A549 (cell line): ENCODE measurements at regions of chr2 and their contacts with region 1.

Region 1: DNA sequence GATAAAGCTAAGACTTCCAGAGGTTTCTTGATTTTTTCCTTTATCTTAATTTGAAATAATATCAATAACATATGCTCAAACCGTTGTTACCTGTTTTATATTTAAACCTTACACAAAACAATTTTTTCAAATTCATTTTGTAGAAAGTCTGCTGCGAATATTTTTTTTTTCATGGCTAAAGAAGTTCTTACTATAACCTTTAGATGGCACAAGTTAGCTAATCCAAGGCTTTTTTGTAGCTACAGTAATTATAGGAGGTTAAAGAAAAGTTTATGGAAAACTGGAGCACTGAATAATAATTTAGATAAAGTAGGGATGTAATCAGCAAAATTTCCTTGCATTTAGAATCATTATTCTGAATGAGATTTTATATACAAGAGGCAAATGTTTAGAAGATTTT is 78.0 kb upstream of the PNPT1 start:
- DNase-seq: peak; percentile 33 to 53
- ATAC-seq: peak in 1 of 2 experiments; percentile 84; a peak in 3 of 6 replicates
- H3K4me3 ChIP-seq: no peak overlapping the region
- H3K27ac ChIP-seq: peak overlapping the region; percentile 65 to 78
- H3K4me1 ChIP-seq: peaks cover 15% of the 10 kb centered on the region
- CTCF ChIP-seq: peak; percentile 89
- EP300 ChIP-seq: no peak
- POLR2A ChIP-seq: no peak
- RAD21 ChIP-seq: peak; percentile 98

Region 2: GRCh38 chr2:55759271-55759921 is 12.2 kb before region 1 on chr2:
- CTCF ChIA-PET with region 1: interaction called, 13 read pairs
- POLR2A ChIA-PET with region 1: no interaction called
- DNase-seq: no peak
- ATAC-seq: no peak
- H3K4me3 ChIP-seq: no peak overlapping the region
- H3K27ac ChIP-seq: no peak overlapping the region
- H3K4me1 ChIP-seq: no peaks in the 10 kb centered on the region
- CTCF ChIP-seq: no peak
- EP300 ChIP-seq: no peak
- POLR2A ChIP-seq: no peak
- RAD21 ChIP-seq: no peak

Region 3: GRCh38 chr2:55843096-55843993 is 71.7 kb after region 1 on chr2:
- CTCF ChIA-PET with region 1: interaction called, 11 read pairs
- POLR2A ChIA-PET with region 1: interaction called, 5 read pairs
- DNase-seq: peak; percentile 18 to 95
- ATAC-seq: peak; percentile 76 to 77
- H3K4me3 ChIP-seq: peak overlapping the region; percentile 7; the same call in 1 of the 3 replicates
- H3K27ac ChIP-seq: peak overlapping the region; percentile 76 to 85
- H3K4me1 ChIP-seq: peaks cover 73% of the 10 kb centered on the region
- CTCF ChIP-seq: no peak
- EP300 ChIP-seq: peak; percentile 76 to 87; a peak in 3 of 5 replicates
- POLR2A ChIP-seq: no peak
- RAD21 ChIP-seq: peak in 1 of 2 experiments; percentile 40; a peak in 3 of 5 replicates

Region 4: DNA sequence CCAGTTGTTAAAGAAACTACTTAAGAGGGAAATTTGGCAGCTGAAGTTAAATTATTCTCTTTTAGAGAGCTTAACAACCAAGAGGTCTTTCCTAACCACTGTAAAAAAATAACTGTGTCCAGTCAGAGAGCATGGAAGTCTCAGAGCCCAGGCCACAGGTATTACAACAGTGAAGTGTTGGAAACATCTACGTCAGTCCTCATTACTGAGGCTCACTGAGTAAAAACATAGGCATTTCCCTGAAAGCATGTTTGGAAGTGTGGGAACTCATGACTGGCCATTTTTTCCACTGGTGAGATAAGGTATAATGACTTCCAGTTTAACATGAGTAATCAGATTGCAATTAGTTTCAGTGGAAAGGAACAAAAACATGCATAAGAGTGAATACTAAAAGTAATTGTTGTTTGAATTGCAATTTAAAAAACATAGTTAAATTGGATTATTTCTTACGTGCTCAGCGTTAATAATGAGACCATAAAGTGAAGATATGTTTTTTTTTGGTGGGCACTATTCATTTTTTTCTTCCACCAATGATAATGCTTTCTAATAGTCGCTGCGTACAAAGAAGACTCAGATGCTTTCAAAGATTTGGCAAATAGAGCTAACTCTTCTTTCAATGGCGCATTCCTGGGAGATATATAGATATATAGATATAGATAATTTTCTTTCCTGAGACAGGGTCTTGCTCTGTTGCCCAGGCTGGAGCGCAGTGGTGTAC is 91.2 kb after region 1 on chr2:
- CTCF ChIA-PET with region 1: interaction called, 17 read pairs
- POLR2A ChIA-PET with region 1: interaction called, 3 read pairs
- DNase-seq: peak; percentile 53 to 94
- ATAC-seq: peak; percentile 94 to 99
- H3K4me3 ChIP-seq: no peak overlapping the region
- H3K27ac ChIP-seq: peak overlapping the region; percentile 89 to 90
- H3K4me1 ChIP-seq: peaks cover 38% of the 10 kb centered on the region
- CTCF ChIP-seq: no peak
- EP300 ChIP-seq: peak; percentile 51 to 87; a peak in 3 of 5 replicates
- POLR2A ChIP-seq: no peak
- RAD21 ChIP-seq: peak; percentile 6 to 57; a peak in 1 of 5 replicates

Region 5: DNA sequence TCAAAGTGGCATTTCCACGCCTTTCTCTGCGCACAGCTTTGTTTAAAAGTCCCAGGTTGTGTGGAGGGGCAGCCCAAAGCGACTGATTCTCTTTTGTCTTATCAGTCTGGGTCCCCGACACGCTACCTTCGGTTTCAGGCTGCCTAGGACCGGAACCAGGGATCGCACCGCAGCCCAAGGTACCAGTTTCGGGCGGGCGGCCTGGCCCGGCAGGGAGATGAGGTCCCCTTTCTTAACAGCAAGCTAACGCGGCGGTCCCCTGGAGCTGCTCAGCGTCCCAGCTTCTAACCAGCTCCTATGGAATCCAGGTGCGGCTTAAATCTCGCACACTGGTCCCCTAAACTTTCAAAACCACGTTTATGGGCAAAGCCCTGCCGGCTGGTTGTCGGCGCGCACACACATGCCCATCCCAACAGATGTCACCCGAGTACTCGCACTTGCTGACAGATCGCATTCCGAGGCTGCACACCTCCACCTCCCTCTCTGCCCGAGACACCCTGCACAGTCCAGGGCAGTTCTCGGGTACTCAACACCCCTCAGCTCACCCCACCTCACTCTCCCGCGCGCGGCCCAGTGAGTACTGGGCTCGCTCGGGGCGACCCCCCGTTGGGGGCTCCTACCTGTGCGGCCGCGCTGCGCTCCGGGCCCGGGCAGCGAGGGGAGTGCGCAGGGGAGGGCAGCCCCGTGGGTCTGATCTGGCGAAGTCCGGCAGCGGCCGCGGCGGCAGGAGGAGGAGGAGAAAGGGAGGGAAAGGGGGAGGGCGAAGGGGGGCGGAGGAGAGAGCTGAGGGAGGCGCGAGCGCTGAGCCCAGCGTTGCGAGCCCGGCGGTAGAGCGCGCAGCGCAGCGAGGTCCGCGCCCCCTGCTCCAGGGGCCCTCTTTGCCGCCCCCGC is 151.7 kb after region 1 on chr2 and contains the start of gene EFEMP1:
- CTCF ChIA-PET with region 1: interaction called, 11 read pairs
- POLR2A ChIA-PET with region 1: no interaction called
- DNase-seq: peak; percentile 41 to 57
- ATAC-seq: peak; percentile 92 to 96
- H3K4me3 ChIP-seq: peak within 1 kb of the TSS; percentile 78
- H3K27ac ChIP-seq: peak within 1 kb of the TSS; percentile 70 to 85
- H3K4me1 ChIP-seq: 0 out of 3 replicates have a peak, but pooled peaks cover 6% of the 10 kb centered on the region
- CTCF ChIP-seq: no peak; the same call in 2 of the 3 replicates
- EP300 ChIP-seq: no peak
- POLR2A ChIP-seq: peak; percentile 20; the same call in 1 of the 2 replicates
- RAD21 ChIP-seq: peak; percentile 33 to 51; a peak in 3 of 5 replicates
- polyA plus RNA-seq, gene EFEMP1: 54.6 and 59.2 TPM in 2 replicates

Region 6: DNA sequence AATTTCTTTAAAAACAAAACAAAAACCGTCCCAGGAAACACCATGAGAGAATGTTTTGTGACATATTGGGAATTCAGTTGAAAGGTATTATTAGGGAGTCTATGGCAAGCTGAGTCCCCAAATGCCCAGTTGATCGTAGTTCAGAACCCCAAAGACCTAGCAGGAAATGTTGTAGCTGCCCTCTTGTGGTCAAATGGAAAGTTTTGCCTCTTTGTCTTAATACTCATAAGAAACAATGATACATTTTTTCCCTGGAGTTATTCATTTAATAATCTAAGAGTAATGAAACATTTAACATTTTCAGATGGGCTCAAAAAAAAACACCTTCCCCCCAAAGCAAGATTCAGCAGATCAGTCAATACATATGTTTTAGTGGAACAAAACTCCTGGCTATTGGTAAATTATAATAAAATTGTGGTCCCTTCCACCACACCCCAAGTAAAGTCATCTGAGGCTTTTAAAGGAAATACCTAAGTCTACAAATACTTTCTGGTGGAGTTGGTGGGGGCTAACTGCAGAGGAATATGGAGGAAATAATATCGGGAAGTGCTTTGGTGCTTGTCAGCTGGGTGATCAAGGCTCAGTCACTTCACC is 189.8 kb after region 1 on chr2:
- CTCF ChIA-PET with region 1: interaction called, 148 read pairs
- POLR2A ChIA-PET with region 1: interaction called, 3 read pairs
- DNase-seq: peak; percentile 43 to 76
- ATAC-seq: peak; percentile 74 to 75; a peak in 5 of 6 replicates
- H3K4me3 ChIP-seq: no peak overlapping the region
- H3K27ac ChIP-seq: peak overlapping the region; percentile 43 to 67; a peak in 5 of 6 replicates
- H3K4me1 ChIP-seq: peaks cover 29% of the 10 kb centered on the region
- CTCF ChIP-seq: peak; percentile 97
- EP300 ChIP-seq: no peak
- POLR2A ChIP-seq: no peak
- RAD21 ChIP-seq: peak; percentile 93 to 95

Region 7: DNA sequence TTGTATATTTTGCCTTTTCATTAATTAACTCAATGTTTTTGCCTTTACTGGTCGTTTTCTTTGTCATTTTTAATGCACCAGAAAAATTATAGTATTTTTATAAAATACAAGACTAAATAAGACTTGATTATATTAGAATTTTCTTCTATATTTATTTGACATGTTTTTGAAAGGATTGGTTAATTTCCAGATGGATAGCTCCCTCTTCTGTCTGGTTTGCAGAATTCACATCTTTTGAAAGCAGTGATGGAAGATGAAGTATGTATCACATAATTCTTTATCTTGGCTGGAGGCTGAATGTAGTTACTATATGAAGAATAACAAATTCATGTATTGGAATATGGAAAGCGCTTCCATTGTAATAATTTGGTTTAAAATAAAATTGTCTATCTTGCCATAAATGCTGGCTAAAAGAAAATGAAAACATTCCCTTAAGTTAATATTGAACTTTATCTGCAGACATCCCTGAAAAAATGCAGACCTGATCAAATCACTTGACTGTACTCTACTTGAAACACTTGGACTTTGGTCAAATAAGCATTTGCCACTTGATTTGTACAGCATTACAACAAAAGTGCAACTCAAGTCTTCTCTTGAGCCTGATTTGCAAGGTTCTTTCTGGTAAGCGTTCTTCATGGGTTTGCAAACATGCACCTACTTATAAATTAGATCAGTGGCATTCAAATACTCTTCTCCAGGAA is 238.3 kb after region 1 on chr2:
- CTCF ChIA-PET with region 1: interaction called, 33 read pairs
- POLR2A ChIA-PET with region 1: interaction called, 4 read pairs
- DNase-seq: peak; percentile 18 to 62
- ATAC-seq: peak in 1 of 2 experiments; percentile 66; a peak in 3 of 6 replicates
- H3K4me3 ChIP-seq: no peak overlapping the region
- H3K27ac ChIP-seq: peak overlapping the region in 1 of 2 experiments; percentile 40; a peak in 2 of 6 replicates
- H3K4me1 ChIP-seq: peaks cover 11% of the 10 kb centered on the region
- CTCF ChIP-seq: peak; percentile 93
- EP300 ChIP-seq: no peak
- POLR2A ChIP-seq: no peak
- RAD21 ChIP-seq: peak; percentile 94 to 95